ENCODE measurements at regions of chr4 and their contacts with region 1.

Region 1: GRCh38 chr4:38782452-38783108 is at the start of gene TLR10:
- DNase-seq: peak in 6 of 9 experiments; percentile 35 to 71 (median 48)
- ATAC-seq: peak; percentile 82
- H3K4me3 ChIP-seq: no peak within 1 kb of the TSS
- H3K4me3 Mint-ChIP-seq: peak within 1 kb of the TSS; percentile 13
- H3K27ac ChIP-seq: no peak within 1 kb of the TSS
- H3K27ac Mint-ChIP-seq: no peak within 1 kb of the TSS
- H3K4me1 ChIP-seq: no peaks in the 10 kb centered on the region
- H3K4me1 Mint-ChIP-seq: peaks cover 4% of the 10 kb centered on the region
- H3K27me3 ChIP-seq: no peaks in the 10 kb centered on the region
- H3K27me3 Mint-ChIP-seq: no peaks in the 10 kb centered on the region
- CTCF ChIP-seq: peak; percentile 86
- total RNA-seq, gene TLR10: 0.22 to 0.28 TPM

Region 2: DNA sequence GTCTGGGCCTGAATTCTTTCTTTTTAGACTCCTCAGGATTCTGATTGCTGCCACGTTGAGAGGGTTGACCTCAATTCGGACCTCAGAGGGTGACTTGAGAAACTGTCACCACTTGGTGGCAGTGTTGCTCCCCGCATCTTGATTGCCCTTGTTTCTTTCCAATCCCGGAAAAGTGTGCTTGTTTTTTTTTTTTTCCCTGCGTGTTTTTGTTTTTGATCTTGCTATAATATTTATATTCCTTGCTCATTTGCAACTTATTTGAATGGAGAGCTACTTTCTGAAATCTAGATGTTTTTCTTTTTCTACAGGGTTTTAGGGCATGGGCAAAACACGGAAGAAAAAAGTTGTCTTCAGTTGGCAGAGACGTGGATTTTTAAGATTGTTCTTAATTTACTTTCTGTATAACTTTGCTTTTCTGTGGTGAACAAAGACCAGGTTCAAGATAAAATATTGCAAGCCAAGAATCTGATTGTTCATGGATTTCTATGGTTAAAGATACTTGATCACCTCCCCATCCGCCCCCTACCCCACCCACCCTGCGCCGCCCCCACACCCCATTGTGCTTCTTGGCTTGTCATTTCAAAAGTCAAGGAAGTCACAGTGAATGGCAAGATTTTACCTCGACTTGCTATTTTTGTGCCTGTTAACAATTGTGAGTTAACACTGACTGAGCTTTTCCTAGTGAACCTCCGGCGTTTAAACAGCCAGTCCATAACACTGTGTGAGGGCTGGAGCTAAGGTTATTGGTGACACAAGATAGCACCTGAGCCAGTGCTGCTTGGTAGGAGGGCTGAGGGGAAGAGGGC is 720.3 kb before region 1 on chr4:
- CTCF ChIA-PET with region 1: interaction called, 8 read pairs
- POLR2A ChIA-PET with region 1: no interaction called
- intact Hi-C with region 1: loop called (anchors 1 kb)
- DNase-seq: peak; percentile 24 to 80 (median 67)
- ATAC-seq: peak; percentile 59
- H3K4me3 ChIP-seq: peak overlapping the region in 1 of 2 experiments; percentile 13
- H3K4me3 Mint-ChIP-seq: peak overlapping the region; percentile 83
- H3K27ac ChIP-seq: no peak overlapping the region
- H3K27ac Mint-ChIP-seq: peak overlapping the region; percentile 11
- H3K4me1 ChIP-seq: no peaks in the 10 kb centered on the region
- H3K4me1 Mint-ChIP-seq: peaks cover 12% of the 10 kb centered on the region
- H3K27me3 ChIP-seq: no peaks in the 10 kb centered on the region
- H3K27me3 Mint-ChIP-seq: no peaks in the 10 kb centered on the region
- CTCF ChIP-seq: peak; percentile 97

Region 3: GRCh38 chr4:38769857-38770256 is 12.7 kb before region 1 on chr4:
- CTCF ChIA-PET with region 1: interaction called, 116 read pairs
- POLR2A ChIA-PET with region 1: no interaction called
- intact Hi-C with region 1: no loop called
- DNase-seq: no peak
- ATAC-seq: no peak
- H3K4me3 ChIP-seq: no peak overlapping the region
- H3K4me3 Mint-ChIP-seq: no peak overlapping the region
- H3K27ac ChIP-seq: no peak overlapping the region
- H3K27ac Mint-ChIP-seq: no peak overlapping the region
- H3K4me1 ChIP-seq: no peaks in the 10 kb centered on the region
- H3K4me1 Mint-ChIP-seq: no peaks in the 10 kb centered on the region
- H3K27me3 ChIP-seq: no peaks in the 10 kb centered on the region
- H3K27me3 Mint-ChIP-seq: no peaks in the 10 kb centered on the region
- CTCF ChIP-seq: no peak

Region 4: GRCh38 chr4:38804654-38805295 is 22.2 kb after region 1 on chr4 and contains the start of gene TLR1:
- CTCF ChIA-PET with region 1: interaction called, 46 read pairs
- POLR2A ChIA-PET with region 1: interaction called, 8 read pairs
- intact Hi-C with region 1: loop called in 1 of 2 experiments (anchors 1 kb)
- DNase-seq: peak in 2 of 9 experiments; percentile 67 to 78
- ATAC-seq: peak; percentile 89
- H3K4me3 ChIP-seq: peak within 1 kb of the TSS; percentile 44 to 49
- H3K4me3 Mint-ChIP-seq: peak within 1 kb of the TSS; percentile 84
- H3K27ac ChIP-seq: peak within 1 kb of the TSS; percentile 48 to 63
- H3K27ac Mint-ChIP-seq: peak within 1 kb of the TSS; percentile 88
- H3K4me1 ChIP-seq: peaks cover 30% of the 10 kb centered on the region
- H3K4me1 Mint-ChIP-seq: peaks cover 38% of the 10 kb centered on the region
- H3K27me3 ChIP-seq: no peaks in the 10 kb centered on the region
- H3K27me3 Mint-ChIP-seq: no peaks in the 10 kb centered on the region
- CTCF ChIP-seq: peak; percentile 71
- total RNA-seq, gene TLR1: 10.1 to 13.4 TPM